HepG2 (cell line): ENCODE measurements at regions of chr1 and their contacts with region 1.

Region 1: GRCh38 chr1:88180449-88181108 is 503.5 kb upstream of the PKN2 start:
- DNase-seq: peak; percentile 89
- ATAC-seq: peak; percentile 90
- H3K4me3 ChIP-seq: no peak overlapping the region; a peak in 1 of 6 replicates
- H3K27ac ChIP-seq: peak overlapping the region; percentile 15
- H3K4me1 ChIP-seq: peaks cover 55% of the 10 kb centered on the region
- H3K27me3 ChIP-seq: no peaks in the 10 kb centered on the region
- CTCF ChIP-seq: peak; percentile 95
- EP300 ChIP-seq: peak in 1 of 2 experiments; percentile 66; a peak in 2 of 4 replicates
- POLR2A ChIP-seq: no peak
- RAD21 ChIP-seq: peak; percentile 87

Region 2: GRCh38 chr1:87794788-87795614 is 385.6 kb before region 1 on chr1:
- CTCF ChIA-PET with region 1: no interaction called
- POLR2A ChIA-PET with region 1: no interaction called
- in situ Hi-C with region 1: loop called (anchors 5 kb)
- intact Hi-C with region 1: loop called (anchors 5 kb)
- DNase-seq: peak; percentile 86
- ATAC-seq: peak; percentile 82
- H3K4me3 ChIP-seq: peak overlapping the region in 1 of 3 experiments; percentile 43; a peak in 1 of 6 replicates
- H3K27ac ChIP-seq: peak overlapping the region; percentile 90
- H3K4me1 ChIP-seq: peaks cover 50% of the 10 kb centered on the region
- H3K27me3 ChIP-seq: no peaks in the 10 kb centered on the region
- CTCF ChIP-seq: no peak
- EP300 ChIP-seq: peak in 1 of 2 experiments; percentile 56; a peak in 2 of 4 replicates
- POLR2A ChIP-seq: no peak
- RAD21 ChIP-seq: no peak

Region 3: GRCh38 chr1:88079036-88079435 is 101.5 kb before region 1 on chr1:
- CTCF ChIA-PET with region 1: no interaction called
- POLR2A ChIA-PET with region 1: no interaction called
- in situ Hi-C with region 1: no loop called
- intact Hi-C with region 1: loop called (anchors 5 kb)
- DNase-seq: peak; percentile 18
- ATAC-seq: peak; percentile 76
- H3K4me3 ChIP-seq: no peak overlapping the region
- H3K27ac ChIP-seq: no peak overlapping the region
- H3K4me1 ChIP-seq: no peaks in the 10 kb centered on the region
- H3K27me3 ChIP-seq: no peaks in the 10 kb centered on the region; a peak in 1 of 5 replicates
- CTCF ChIP-seq: peak; percentile 54
- EP300 ChIP-seq: no peak
- POLR2A ChIP-seq: no peak
- RAD21 ChIP-seq: no peak

Region 4: GRCh38 chr1:88302843-88303486 is 122.4 kb after region 1 on chr1:
- CTCF ChIA-PET with region 1: no interaction called
- POLR2A ChIA-PET with region 1: no interaction called
- in situ Hi-C with region 1: loop called (anchors 5 kb)
- intact Hi-C with region 1: loop called (anchors 1 kb)
- DNase-seq: peak; percentile 8
- ATAC-seq: peak; percentile 57
- H3K4me3 ChIP-seq: no peak overlapping the region
- H3K27ac ChIP-seq: no peak overlapping the region
- H3K4me1 ChIP-seq: no peaks in the 10 kb centered on the region
- H3K27me3 ChIP-seq: no peaks in the 10 kb centered on the region; a peak in 1 of 5 replicates
- CTCF ChIP-seq: peak; percentile 21; the same call in 1 of the 2 replicates
- EP300 ChIP-seq: no peak
- POLR2A ChIP-seq: no peak
- RAD21 ChIP-seq: no peak

Region 5: GRCh38 chr1:88683541-88684481 is 503.2 kb after region 1 on chr1 and contains the start of gene PKN2:
- CTCF ChIA-PET with region 1: no interaction called
- POLR2A ChIA-PET with region 1: no interaction called
- in situ Hi-C with region 1: no loop called
- intact Hi-C with region 1: loop called (anchors 2 kb)
- DNase-seq: peak; percentile 96
- ATAC-seq: peak; percentile 93
- H3K4me3 ChIP-seq: peak within 1 kb of the TSS; percentile 97 to 99 (median 97)
- H3K27ac ChIP-seq: peak within 1 kb of the TSS; percentile 99
- H3K4me1 ChIP-seq: peaks cover 27% of the 10 kb centered on the region
- H3K27me3 ChIP-seq: no peaks in the 10 kb centered on the region; a peak in 1 of 5 replicates
- CTCF ChIP-seq: peak; percentile 61
- EP300 ChIP-seq: no peak; a peak in 1 of 4 replicates
- POLR2A ChIP-seq: peak; percentile 90 to 94
- RAD21 ChIP-seq: no peak
- total RNA-seq, gene PKN2: 29.4 and 45.4 TPM in 2 replicates